ENCODE measurements at regions of chr5 and their contacts with region 1.

Region 1: DNA sequence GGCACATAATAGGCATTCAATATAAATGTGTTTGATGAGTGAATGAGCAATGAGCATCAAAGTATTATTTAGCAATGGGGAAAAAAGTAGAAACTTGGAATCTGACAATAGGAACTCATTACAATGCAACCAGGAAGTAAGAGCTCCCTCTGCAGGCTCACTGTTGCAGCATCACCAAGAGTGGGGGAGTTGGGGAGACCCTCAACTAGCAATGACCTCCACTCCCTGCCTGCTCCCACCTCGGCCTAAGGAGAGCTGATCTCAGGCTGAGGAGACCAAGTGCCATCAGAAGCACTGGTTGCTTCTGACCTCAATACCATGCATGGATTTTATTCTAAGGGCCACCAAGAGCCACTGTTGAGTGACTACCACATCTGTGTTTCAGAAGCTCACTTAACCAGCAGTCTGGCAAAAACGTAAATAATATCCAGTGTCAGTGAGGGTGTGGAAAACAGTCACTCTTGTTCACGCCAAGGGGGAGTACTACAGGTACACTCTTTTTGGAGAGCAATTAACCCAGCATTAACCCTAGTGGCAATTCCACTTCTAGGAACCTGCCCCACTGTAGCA is 8.0 kb downstream of the VDAC1 start:
- DNase-seq: no peak
- H3K4me3 Mint-ChIP-seq: no peak overlapping the region
- H3K27ac Mint-ChIP-seq: no peak overlapping the region
- H3K4me1 Mint-ChIP-seq: peaks cover 63% of the 10 kb centered on the region
- H3K27me3 Mint-ChIP-seq: no peaks in the 10 kb centered on the region

Region 2: GRCh38 chr5:133952729-133953567 is 43.8 kb before region 1 on chr5:
- CTCF ChIA-PET with region 1: no interaction called
- POLR2A ChIA-PET with region 1: no interaction called
- DNase-seq: no peak
- H3K4me3 Mint-ChIP-seq: no peak overlapping the region
- H3K27ac Mint-ChIP-seq: no peak overlapping the region
- H3K4me1 Mint-ChIP-seq: peaks cover 7% of the 10 kb centered on the region
- H3K27me3 Mint-ChIP-seq: no peaks in the 10 kb centered on the region

Region 3: DNA sequence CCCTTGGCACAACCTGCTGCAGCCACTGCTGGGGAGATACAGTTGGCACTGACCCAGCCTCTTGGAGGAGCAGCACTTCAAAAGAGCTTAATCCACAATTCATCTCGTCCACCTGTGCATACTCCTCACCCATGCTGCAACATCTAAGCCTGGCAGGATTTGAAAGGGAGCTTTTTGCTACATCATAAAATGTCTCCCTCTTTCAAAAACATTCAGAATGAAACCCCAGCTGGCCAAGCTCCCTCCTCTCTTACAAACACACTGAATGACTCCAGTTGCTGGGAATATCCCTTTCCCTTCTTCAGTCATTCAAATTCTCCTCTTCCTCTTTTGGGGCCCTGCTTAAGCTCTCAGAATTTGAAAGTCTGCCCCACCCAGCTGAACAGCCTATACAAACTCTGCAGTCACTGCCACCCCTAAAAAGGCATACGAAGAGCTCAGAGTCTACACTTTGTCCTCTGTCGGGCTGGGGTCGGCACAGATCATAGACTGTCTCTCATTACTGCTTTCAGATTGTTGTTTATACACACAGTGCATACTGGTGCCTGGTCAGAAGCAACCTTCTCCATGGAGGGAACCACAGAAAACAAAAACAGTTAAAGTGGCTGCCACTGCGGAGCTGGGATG is 19.5 kb before region 1 on chr5:
- CTCF ChIA-PET with region 1: interaction called, 87 read pairs
- POLR2A ChIA-PET with region 1: no interaction called
- DNase-seq: no peak
- H3K4me3 Mint-ChIP-seq: no peak overlapping the region
- H3K27ac Mint-ChIP-seq: peak overlapping the region; percentile 74
- H3K4me1 Mint-ChIP-seq: peaks cover 20% of the 10 kb centered on the region
- H3K27me3 Mint-ChIP-seq: no peaks in the 10 kb centered on the region